ENCODE measurements at regions of chr14 and their contacts with region 1.

Region 1: GRCh38 chr14:103862393-103862782 is 15.0 kb upstream of the PPP1R13B start:
- DNase-seq: no peak
- ATAC-seq: no peak
- H3K4me3 ChIP-seq: no peak overlapping the region
- H3K27ac ChIP-seq: no peak overlapping the region
- H3K4me1 ChIP-seq: no peaks in the 10 kb centered on the region
- H3K27me3 ChIP-seq: peaks cover 13% of the 10 kb centered on the region
- CTCF ChIP-seq: no peak
- POLR2A ChIP-seq: no peak
- RAD21 ChIP-seq: no peak

Region 2: GRCh38 chr14:101909371-101910096 is 1952.9 kb before region 1 on chr14:
- CTCF ChIA-PET with region 1: no interaction called
- POLR2A ChIA-PET with region 1: interaction called, 11 read pairs
- dilution Hi-C with region 1: no loop called
- in situ Hi-C with region 1: no loop called
- intact Hi-C with region 1: no loop called
- DNase-seq: no peak
- ATAC-seq: no peak
- H3K4me3 ChIP-seq: no peak overlapping the region
- H3K27ac ChIP-seq: no peak overlapping the region
- H3K4me1 ChIP-seq: no peaks in the 10 kb centered on the region
- H3K27me3 ChIP-seq: no peaks in the 10 kb centered on the region
- CTCF ChIP-seq: no peak
- POLR2A ChIP-seq: no peak
- RAD21 ChIP-seq: no peak

Region 3: GRCh38 chr14:103746701-103747100 is 115.7 kb before region 1 on chr14:
- CTCF ChIA-PET with region 1: no interaction called
- POLR2A ChIA-PET with region 1: no interaction called
- dilution Hi-C with region 1: no loop called
- in situ Hi-C with region 1: no loop called
- intact Hi-C with region 1: no loop called
- DNase-seq: peak; percentile 58
- ATAC-seq: peak; percentile 44; the same call in 1 of the 2 replicates
- H3K4me3 ChIP-seq: no peak overlapping the region
- H3K27ac ChIP-seq: no peak overlapping the region
- H3K4me1 ChIP-seq: no peaks in the 10 kb centered on the region
- H3K27me3 ChIP-seq: no peaks in the 10 kb centered on the region
- CTCF ChIP-seq: no peak
- POLR2A ChIP-seq: no peak
- RAD21 ChIP-seq: no peak

Region 4: GRCh38 chr14:103782376-103782775 is 80.0 kb before region 1 on chr14:
- CTCF ChIA-PET with region 1: no interaction called
- POLR2A ChIA-PET with region 1: interaction called, 17 read pairs
- dilution Hi-C with region 1: no loop called
- in situ Hi-C with region 1: no loop called
- intact Hi-C with region 1: no loop called
- DNase-seq: no peak
- ATAC-seq: no peak
- H3K4me3 ChIP-seq: no peak overlapping the region
- H3K27ac ChIP-seq: no peak overlapping the region
- H3K4me1 ChIP-seq: no peaks in the 10 kb centered on the region
- H3K27me3 ChIP-seq: no peaks in the 10 kb centered on the region
- CTCF ChIP-seq: no peak
- POLR2A ChIP-seq: no peak
- RAD21 ChIP-seq: no peak

Region 5: DNA sequence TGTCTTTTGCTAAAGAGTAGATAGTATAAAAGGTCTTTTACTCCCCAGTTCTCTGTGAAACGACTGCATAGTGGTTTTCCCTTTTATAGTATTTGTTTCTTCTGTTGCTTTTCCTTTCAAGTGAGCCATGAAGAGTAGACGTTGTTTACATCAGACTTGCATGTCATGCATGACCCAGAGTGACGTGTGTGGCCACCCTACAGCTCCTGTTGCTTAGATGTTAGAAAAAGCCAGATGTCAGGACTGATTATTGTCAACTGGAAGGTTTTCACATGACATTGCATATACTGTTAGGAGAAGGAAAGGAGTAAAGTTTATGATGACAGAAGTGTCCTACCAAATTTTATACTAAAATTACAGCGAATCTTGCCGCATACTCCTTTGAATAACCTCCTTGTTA is 81.3 kb after region 1 on chr14:
- CTCF ChIA-PET with region 1: no interaction called
- POLR2A ChIA-PET with region 1: no interaction called
- dilution Hi-C with region 1: no loop called
- in situ Hi-C with region 1: no loop called
- intact Hi-C with region 1: no loop called
- DNase-seq: peak; percentile 66
- ATAC-seq: no peak
- H3K4me3 ChIP-seq: no peak overlapping the region
- H3K27ac ChIP-seq: no peak overlapping the region
- H3K4me1 ChIP-seq: no peaks in the 10 kb centered on the region
- H3K27me3 ChIP-seq: peaks cover 15% of the 10 kb centered on the region
- CTCF ChIP-seq: no peak
- POLR2A ChIP-seq: no peak
- RAD21 ChIP-seq: no peak

Measured in IMR-90 (cell line).